ENCODE measurements at regions of chr17 and their contacts with region 1.

Region 1: DNA sequence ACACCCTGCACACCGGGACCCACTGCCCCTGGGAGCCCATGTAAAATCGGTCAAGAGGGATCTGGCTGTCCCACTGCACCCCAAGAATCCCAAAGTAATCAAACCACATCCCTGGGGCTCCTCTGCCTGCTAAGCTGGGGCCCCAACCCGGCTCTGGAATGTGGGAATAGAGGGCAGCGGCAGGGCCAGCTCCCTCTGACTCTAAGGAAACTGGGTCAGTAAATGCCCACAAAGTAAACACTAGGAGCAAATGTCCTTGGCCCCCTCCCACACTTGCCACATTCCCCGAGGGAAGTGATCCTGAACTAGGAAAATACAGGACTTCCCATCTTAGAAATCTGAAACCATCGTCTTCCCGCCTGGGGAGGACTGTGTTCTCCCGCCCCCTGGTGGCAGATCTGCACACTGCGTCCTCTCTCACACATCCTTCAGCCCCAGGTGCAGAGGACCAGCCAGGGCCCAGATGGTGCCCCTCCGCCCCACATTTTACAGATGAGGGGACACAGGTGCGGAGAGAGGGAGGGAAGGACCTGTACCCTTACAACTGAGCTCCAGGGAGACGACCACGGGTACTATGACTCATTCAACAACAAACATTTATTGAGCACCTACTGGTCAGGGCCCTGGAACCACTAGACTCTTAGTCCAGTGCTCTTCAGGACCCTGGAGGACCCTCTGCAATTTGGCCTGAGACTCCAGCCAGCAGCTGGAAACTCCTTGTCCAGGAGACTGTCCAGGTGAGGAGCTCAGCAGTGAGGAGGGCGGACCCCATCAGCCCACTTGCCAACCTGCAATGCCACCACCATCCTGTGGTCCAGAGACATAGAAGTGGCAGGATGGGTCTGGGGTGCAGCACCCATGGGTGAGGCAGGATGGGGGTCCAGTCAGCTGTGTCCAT is 10.1 kb downstream of the P3H4 start:
- DNase-seq: peak; percentile 50 to 67 (median 62)
- H3K4me3 ChIP-seq: no peak overlapping the region
- H3K4me3 Mint-ChIP-seq: no peak overlapping the region
- H3K27ac ChIP-seq: no peak overlapping the region
- H3K27ac Mint-ChIP-seq: peak overlapping the region in 1 of 7 donors; percentile 57
- H3K4me1 ChIP-seq: no peaks in the 10 kb centered on the region
- H3K4me1 Mint-ChIP-seq: peaks cover 1 to 11% (median 5%) of the 10 kb centered on the region in 4 donors
- H3K27me3 ChIP-seq: no peaks in the 10 kb centered on the region
- H3K27me3 Mint-ChIP-seq: peaks cover 0 to 3% of the 10 kb centered on the region in 2 donors

Region 2: DNA sequence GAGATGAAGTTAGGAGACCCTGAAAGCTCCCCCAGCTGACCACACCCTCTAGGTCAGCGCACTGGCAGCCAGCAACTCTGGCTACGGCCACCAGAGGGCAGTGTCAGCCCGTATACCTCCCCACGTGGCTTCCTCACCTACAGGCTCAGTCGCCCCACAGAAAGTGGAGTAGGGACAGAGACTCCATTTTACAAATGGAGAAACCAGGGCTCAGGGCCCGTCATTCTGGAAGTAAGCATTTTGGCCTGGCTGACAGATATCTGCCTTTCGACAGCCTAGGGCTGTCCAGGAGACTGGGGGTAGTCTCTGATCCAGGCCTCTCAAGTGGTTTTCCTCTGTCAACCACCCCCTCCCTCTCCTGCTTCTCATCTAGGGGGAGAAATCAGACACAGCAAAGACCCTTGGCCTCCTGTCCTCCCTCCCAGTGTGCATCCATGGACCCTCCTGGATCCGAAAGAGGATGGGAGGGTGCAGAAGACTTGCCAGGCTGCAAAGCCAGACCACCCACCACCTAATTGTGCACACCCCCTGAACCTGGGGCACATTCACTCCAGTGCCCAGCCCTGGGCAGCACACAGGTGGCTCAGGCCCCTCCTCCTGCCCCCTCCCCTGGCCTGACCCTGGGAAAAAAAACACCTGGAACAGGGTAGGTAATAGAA is 63.4 kb before region 1 on chr17:
- CTCF ChIA-PET with region 1: interaction called, 47 read pairs
- POLR2A ChIA-PET with region 1: interaction called, 7 read pairs
- intact Hi-C with region 1: loop called (anchors 1 kb)
- DNase-seq: peak; percentile 70 to 78 (median 73)
- H3K4me3 ChIP-seq: no peak overlapping the region
- H3K4me3 Mint-ChIP-seq: peak overlapping the region in 2 of 8 donors; percentile 42 to 72
- H3K27ac ChIP-seq: no peak overlapping the region
- H3K27ac Mint-ChIP-seq: peak overlapping the region in 2 of 7 donors; percentile 15 to 56
- H3K4me1 ChIP-seq: peaks cover 15% of the 10 kb centered on the region
- H3K4me1 Mint-ChIP-seq: peaks cover 2 to 9% (median 9%) of the 10 kb centered on the region in 4 donors
- H3K27me3 ChIP-seq: peaks cover 12% of the 10 kb centered on the region
- H3K27me3 Mint-ChIP-seq: peaks cover 12 to 18% of the 10 kb centered on the region in 2 donors

Region 3: DNA sequence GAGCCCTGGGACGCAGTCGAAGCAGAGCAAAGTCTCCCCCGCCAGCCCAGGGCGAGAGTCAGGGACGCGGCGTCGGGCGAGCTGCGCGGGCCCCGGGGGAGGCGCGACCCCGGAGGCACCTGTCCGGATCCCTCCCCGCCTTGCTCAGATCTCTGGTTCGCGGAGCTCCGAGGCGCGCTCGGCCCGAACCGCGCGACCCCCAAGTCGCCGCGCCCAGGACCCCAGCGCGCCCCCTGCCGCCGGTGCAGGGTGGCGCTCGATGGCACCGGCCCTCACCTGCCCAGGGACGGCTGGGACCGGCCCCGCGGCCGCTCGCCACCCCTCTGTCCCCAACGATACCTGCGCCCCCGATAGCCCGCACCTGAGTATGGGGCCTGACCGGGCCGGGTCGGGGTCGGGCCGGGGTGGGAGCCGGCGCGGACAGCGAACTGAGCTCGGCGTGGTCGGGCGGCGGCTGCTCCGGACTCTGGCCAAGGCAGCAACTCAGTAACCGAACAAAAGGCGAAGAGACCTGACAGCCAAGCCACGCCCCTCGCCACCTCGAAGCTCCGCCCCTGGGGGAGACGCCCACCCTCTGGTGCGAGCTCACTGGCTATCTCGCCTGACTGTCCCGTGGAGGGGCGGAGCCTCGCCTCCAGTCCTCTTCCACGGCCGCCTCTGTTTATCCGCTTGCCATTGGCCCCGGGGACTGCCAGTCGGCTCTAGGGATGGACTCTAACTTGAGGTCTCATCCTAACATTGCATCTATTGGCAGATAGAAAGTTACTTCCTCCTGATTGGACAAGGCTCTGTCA is 15.2 kb before region 1 on chr17 and contains the start of gene JUP:
- CTCF ChIA-PET with region 1: interaction called, 30 read pairs
- POLR2A ChIA-PET with region 1: interaction called, 3 read pairs
- intact Hi-C with region 1: no loop called
- DNase-seq: peak; percentile 80 to 90 (median 86)
- H3K4me3 ChIP-seq: peak within 1 kb of the TSS in 1 of 2 donors; percentile 32
- H3K4me3 Mint-ChIP-seq: peak within 1 kb of the TSS; percentile 75 to 85 (median 80)
- H3K27ac ChIP-seq: no peak within 1 kb of the TSS
- H3K27ac Mint-ChIP-seq: peak within 1 kb of the TSS in 4 of 7 donors; percentile 29 to 74 (median 50)
- H3K4me1 ChIP-seq: peaks cover 18% of the 10 kb centered on the region
- H3K4me1 Mint-ChIP-seq: peaks cover 12 to 37% (median 18%) of the 10 kb centered on the region in 4 donors
- H3K27me3 ChIP-seq: peaks cover 21% of the 10 kb centered on the region
- H3K27me3 Mint-ChIP-seq: peaks cover 11 to 28% of the 10 kb centered on the region in 2 donors
- total RNA-seq, gene JUP: 0.15 TPM in 1 of 2 experiments, not detected in the other